Posterior vena cava (tissue), 2 donors: ENCODE measurements at regions of chr5 and their contacts with region 1.

Region 1: GRCh38 chr5:80507663-80508062 is 19.8 kb downstream of the FAM151B start:
- DNase-seq: no peak

Region 2: GRCh38 chr5:80437326-80437725 is 70.3 kb before region 1 on chr5:
- intact Hi-C with region 1: no loop called
- DNase-seq: no peak

Region 3: DNA sequence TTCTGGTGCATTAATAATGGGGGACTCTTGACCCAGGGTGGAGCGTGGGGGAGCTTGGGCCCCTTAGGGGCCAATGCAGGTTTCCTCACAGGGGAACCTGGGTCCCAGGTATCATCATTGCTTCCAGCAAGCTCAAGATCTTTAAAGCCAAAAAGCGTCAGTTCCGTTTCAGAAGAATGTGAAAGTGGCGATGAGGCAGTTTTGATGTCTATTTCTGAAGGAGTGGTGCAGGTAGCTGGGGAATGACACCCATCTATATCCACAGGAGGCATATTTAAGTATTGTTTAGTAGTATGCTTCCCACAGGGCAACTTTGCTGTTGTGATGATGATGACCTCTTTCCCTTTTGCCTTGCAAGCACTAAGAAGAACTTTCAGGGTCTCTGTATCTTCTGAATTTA is 51.6 kb after region 1 on chr5:
- intact Hi-C with region 1: loop called in 1 of 2 experiments (anchors 2 kb)
- DNase-seq: no peak